Sciatic nerve (tissue), 2 donors: ENCODE measurements at regions of chr15 and their contacts with region 1.

Region 1: DNA sequence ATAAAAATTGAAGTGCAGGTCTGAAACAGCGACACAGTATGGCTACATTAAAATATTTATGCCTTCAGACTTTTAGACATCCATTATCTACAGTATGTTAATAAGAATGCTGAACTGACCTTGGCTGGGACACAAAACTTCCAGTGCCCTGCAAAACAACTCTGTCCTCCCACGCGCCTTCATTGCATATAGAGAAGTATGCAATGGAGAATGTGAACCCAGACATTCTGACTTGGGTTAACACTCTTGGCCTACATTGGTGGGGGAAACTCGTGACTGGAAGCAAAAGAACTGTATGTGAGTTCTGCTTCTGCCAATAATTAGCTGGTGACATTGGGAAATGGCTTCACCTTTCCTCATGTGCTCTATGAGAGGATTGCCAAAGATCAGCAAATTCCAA is 110.5 kb upstream of the SLC24A5 start:
- DNase-seq: no peak
- ATAC-seq: no peak

Region 2: GRCh38 chr15:47523681-47524475 is 486.4 kb before region 1 on chr15:
- intact Hi-C with region 1: no loop called
- DNase-seq: no peak
- ATAC-seq: peak; percentile 60

Region 3: DNA sequence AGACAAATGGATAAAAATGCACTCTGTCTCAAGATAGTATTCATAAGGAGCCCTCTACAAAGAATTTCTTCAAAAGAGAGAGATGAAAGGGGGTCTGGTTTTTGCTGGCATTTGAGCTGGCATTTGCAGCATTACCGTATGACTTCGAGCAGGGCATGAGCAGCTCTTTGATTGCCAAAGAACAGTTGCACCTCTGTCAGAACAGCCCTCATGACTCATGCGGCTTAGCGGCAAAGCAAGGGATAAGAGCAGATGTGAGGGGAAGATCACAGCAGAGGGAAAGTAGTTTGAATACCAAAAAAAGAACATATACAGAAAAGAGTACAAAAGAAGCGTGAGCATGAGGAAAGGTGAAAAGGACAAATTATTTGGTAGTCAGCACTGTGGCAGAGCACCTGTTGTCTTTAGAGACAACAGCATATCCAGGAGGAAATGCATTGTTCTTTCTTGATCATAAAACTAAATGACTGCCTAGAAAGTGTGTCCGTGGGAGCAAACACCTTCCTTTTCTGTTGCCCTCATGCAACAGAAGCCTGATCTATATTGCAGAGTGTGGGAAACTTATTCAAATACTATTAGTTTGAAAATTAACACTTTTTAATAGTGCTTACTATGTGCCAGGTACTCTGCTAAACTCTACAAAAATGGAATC is 30.0 kb after region 1 on chr15:
- intact Hi-C with region 1: loop called (anchors 2 kb)
- DNase-seq: no peak
- ATAC-seq: no peak

Region 4: GRCh38 chr15:48052946-48053345 is 42.6 kb after region 1 on chr15:
- intact Hi-C with region 1: no loop called
- DNase-seq: no peak
- ATAC-seq: no peak

Region 5: DNA sequence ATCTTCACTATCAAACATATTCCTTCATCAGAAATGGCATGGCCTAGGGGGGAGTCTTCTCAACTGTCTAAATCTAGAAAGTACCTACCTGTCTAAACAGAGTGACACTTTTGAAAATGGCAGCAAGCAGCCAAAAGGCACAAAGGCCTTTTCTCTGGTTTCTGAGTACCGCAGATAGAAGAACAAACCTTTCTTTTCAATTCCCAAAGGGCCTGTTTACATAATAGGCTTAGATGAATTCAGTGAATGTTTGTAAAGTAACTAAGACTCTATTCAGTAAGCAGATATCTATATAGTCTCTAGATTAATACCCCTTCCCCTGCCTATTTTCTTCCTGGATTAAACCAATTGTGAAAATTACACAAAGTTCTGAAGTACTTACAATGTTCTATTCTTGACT is 160.7 kb after region 1 on chr15:
- intact Hi-C with region 1: no loop called
- DNase-seq: no peak
- ATAC-seq: no peak